GM12878 (cell line): ENCODE measurements at regions of chr7 and their contacts with region 1.

Region 1: GRCh38 chr7:39333701-39334100 is 232.5 kb upstream of the YAE1 start:
- DNase-seq: no peak
- ATAC-seq: no peak
- H3K4me3 ChIP-seq: no peak overlapping the region
- H3K27ac ChIP-seq: no peak overlapping the region
- H3K4me1 ChIP-seq: no peaks in the 10 kb centered on the region
- H3K27me3 ChIP-seq: no peaks in the 10 kb centered on the region; a peak in 1 of 4 replicates
- CTCF ChIP-seq: no peak
- EP300 ChIP-seq: no peak
- POLR2A ChIP-seq: no peak
- RAD21 ChIP-seq: no peak

Region 2: GRCh38 chr7:39321909-39322498 is 11.7 kb before region 1 on chr7:
- CTCF ChIA-PET with region 1: interaction called, 5 read pairs
- POLR2A ChIA-PET with region 1: interaction called, 6 read pairs
- RAD21 ChIA-PET with region 1: no interaction called
- SMC1A ChIA-PET with region 1: interaction called, 27 read pairs
- in situ Hi-C with region 1: no loop called
- intact Hi-C with region 1: no loop called
- DNase-seq: no peak
- ATAC-seq: peak; percentile 87
- H3K4me3 ChIP-seq: no peak overlapping the region
- H3K27ac ChIP-seq: no peak overlapping the region
- H3K4me1 ChIP-seq: no peaks in the 10 kb centered on the region
- H3K27me3 ChIP-seq: no peaks in the 10 kb centered on the region
- CTCF ChIP-seq: no peak
- EP300 ChIP-seq: no peak
- POLR2A ChIP-seq: no peak
- RAD21 ChIP-seq: no peak

Region 3: GRCh38 chr7:39383136-39383535 is 49.4 kb after region 1 on chr7:
- CTCF ChIA-PET with region 1: no interaction called
- POLR2A ChIA-PET with region 1: no interaction called
- RAD21 ChIA-PET with region 1: no interaction called
- SMC1A ChIA-PET with region 1: no interaction called
- in situ Hi-C with region 1: no loop called
- intact Hi-C with region 1: no loop called
- DNase-seq: no peak
- ATAC-seq: no peak
- H3K4me3 ChIP-seq: no peak overlapping the region
- H3K27ac ChIP-seq: no peak overlapping the region
- H3K4me1 ChIP-seq: no peaks in the 10 kb centered on the region
- H3K27me3 ChIP-seq: peaks cover 0 to 2% of the 10 kb centered on the region in 2 experiments; a peak in 2 of 4 replicates
- CTCF ChIP-seq: no peak
- EP300 ChIP-seq: no peak
- POLR2A ChIP-seq: no peak
- RAD21 ChIP-seq: no peak